ENCODE measurements at regions of chr11 and their contacts with region 1.

Region 1: GRCh38 chr11:58024601-58025091 is 965 bp downstream of the OR9Q1 start:
- DNase-seq: peak; percentile 82
- H3K4me3 ChIP-seq: no peak overlapping the region
- H3K27ac ChIP-seq: peak overlapping the region; percentile 88
- H3K4me1 ChIP-seq: peaks cover 60% of the 10 kb centered on the region
- H3K27me3 ChIP-seq: no peaks in the 10 kb centered on the region
- CTCF ChIP-seq: no peak

Region 2: DNA sequence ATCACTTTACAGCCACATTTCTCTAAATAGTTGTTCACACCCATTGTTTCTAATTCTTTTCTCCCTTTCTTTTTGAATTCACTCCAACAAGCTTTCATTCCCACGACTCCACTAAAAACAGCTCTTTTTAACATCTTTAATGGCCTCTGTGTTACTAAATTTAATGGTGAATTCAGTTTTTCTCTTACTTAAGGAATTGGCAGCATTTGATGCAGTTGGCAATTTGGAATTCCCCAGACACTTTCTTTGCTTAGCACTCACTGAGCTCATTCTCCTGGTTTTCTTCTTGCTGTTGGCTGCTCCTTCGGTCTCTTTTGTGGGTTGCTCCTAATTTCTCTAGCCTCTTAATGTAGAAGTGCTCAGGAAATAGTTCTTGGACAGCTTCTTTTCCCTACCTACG is 41.5 kb before region 1 on chr11:
- intact Hi-C with region 1: loop called (anchors 2 kb)
- DNase-seq: no peak
- H3K4me3 ChIP-seq: no peak overlapping the region
- H3K27ac ChIP-seq: peak overlapping the region; percentile 37
- H3K4me1 ChIP-seq: peaks cover 6% of the 10 kb centered on the region
- H3K27me3 ChIP-seq: no peaks in the 10 kb centered on the region
- CTCF ChIP-seq: no peak

Region 3: GRCh38 chr11:58043379-58043778 is 18.7 kb after region 1 on chr11:
- intact Hi-C with region 1: no loop called
- DNase-seq: no peak
- H3K4me3 ChIP-seq: no peak overlapping the region
- H3K27ac ChIP-seq: no peak overlapping the region
- H3K4me1 ChIP-seq: no peaks in the 10 kb centered on the region
- H3K27me3 ChIP-seq: no peaks in the 10 kb centered on the region
- CTCF ChIP-seq: no peak

Region 4: DNA sequence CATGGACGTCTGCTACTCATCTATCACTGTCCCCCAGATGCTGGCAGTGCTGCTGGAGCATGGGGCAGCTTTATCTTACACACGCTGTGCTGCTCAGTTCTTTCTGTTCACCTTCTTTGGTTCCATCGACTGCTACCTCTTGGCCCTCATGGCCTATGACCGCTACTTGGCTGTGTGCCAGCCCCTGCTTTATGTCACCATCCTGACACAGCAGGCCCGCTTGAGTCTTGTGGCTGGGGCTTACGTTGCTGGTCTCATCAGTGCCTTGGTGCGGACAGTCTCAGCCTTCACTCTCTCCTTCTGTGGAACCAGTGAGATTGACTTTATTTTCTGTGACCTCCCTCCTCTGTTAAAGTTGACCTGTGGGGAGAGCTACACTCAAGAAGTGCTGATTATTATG is 155.0 kb after region 1 on chr11:
- intact Hi-C with region 1: loop called (anchors 10 kb)
- DNase-seq: peak; percentile 13
- H3K4me3 ChIP-seq: no peak overlapping the region
- H3K27ac ChIP-seq: no peak overlapping the region
- H3K4me1 ChIP-seq: no peaks in the 10 kb centered on the region
- H3K27me3 ChIP-seq: no peaks in the 10 kb centered on the region
- CTCF ChIP-seq: no peak

Region 5: DNA sequence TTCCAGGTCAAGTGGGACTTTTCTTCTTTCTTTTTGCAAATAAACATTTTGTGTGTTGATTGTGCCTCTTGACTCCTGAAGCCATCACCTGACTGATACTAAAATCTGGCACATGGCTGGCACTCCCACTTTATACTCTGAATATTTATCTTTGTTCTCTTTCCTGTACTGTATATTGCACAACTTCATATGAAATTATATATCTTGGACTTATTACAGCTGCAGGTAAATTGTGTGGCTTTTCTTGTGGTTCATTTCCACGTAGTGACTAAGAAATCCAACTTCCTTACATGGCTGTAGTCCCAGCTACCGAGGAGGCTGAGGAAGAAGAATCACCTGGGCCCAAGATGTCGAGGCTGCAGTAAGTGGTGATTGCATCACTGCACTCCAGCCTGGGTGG is 441.0 kb after region 1 on chr11:
- intact Hi-C with region 1: no loop called
- DNase-seq: no peak
- H3K4me3 ChIP-seq: no peak overlapping the region
- H3K27ac ChIP-seq: no peak overlapping the region
- H3K4me1 ChIP-seq: no peaks in the 10 kb centered on the region
- H3K27me3 ChIP-seq: no peaks in the 10 kb centered on the region
- CTCF ChIP-seq: no peak

Measured in left ventricle myocardium inferior (tissue), 1 donor.